ENCODE measurements at regions of chr6 and their contacts with region 1.

Region 1: DNA sequence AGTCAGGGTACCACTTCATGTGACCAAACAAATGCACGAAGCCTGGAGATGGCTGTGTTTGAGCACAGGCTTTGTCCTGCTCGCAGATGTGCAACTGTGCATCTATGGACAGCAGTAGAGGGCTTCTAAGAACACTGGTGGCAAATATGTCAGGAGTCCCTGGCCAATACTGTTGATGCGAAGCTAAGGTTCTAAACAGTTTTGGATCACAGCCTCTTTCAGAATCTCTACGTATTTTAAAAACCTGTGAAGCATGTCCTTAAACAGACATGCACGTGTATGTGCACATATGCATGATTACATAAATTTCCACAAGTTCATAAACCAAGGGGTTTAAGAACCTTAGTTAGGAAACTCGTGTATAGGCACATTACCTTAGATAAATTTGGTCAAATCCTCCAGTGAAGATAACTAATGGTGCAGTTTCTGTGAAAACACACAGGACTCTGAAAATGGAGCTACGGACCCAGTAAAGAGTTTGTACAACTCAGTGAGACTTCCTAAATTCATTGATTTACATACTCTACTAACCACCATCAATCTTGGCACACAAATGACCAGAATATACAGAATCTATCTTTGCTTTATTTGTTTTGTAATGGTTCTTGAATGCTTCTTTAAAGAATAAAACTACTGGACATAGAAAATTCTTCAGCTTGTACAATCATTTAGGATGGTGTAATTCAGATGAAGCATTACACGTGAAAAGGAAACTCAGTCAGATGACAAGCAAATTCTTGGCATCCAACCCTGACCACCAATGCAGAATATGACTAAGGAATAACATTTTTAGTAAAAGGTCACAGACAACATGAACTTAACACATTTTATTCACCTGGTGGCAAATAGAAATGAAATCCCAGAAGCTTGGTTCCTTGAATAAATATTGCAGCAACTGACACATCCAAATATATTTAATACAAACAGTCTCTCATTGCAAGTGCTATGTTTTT is 27.4 kb downstream of the KCNQ5 start:
- DNase-seq: no peak
- H3K4me3 Mint-ChIP-seq: no peak overlapping the region
- H3K27ac Mint-ChIP-seq: peak overlapping the region; percentile 35
- H3K4me1 Mint-ChIP-seq: peaks cover 41% of the 10 kb centered on the region
- H3K27me3 Mint-ChIP-seq: no peaks in the 10 kb centered on the region

Region 2: GRCh38 chr6:72683797-72684196 is 34.5 kb after region 1 on chr6:
- intact Hi-C with region 1: loop called (anchors 5 kb)
- DNase-seq: no peak
- H3K4me3 Mint-ChIP-seq: no peak overlapping the region
- H3K27ac Mint-ChIP-seq: no peak overlapping the region
- H3K4me1 Mint-ChIP-seq: peaks cover 12% of the 10 kb centered on the region
- H3K27me3 Mint-ChIP-seq: no peaks in the 10 kb centered on the region

Region 3: DNA sequence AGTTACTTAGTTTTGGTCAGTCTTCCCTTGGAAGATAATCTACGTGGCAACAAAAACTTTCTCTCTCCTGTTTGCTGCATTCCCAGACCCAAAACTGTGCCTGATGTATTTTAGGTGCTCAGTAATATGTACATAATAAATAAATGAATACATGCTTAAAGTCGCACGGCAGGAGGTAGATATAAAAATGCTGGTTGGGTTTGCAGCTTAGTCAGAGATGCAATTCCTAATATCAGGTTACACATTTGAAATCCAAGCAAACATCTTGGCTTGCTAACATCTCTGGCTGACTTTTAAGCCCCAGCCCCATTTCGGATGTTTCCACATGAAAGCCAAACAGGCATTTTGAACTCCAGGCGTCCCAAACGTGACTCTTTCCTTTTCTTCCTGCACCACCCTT is 63.6 kb after region 1 on chr6:
- intact Hi-C with region 1: no loop called
- DNase-seq: no peak
- H3K4me3 Mint-ChIP-seq: no peak overlapping the region
- H3K27ac Mint-ChIP-seq: no peak overlapping the region
- H3K4me1 Mint-ChIP-seq: peaks cover 2% of the 10 kb centered on the region
- H3K27me3 Mint-ChIP-seq: no peaks in the 10 kb centered on the region

Region 4: GRCh38 chr6:72740135-72740534 is 90.8 kb after region 1 on chr6:
- intact Hi-C with region 1: loop called (anchors 2 kb)
- DNase-seq: no peak
- H3K4me3 Mint-ChIP-seq: no peak overlapping the region
- H3K27ac Mint-ChIP-seq: peak overlapping the region; percentile 47
- H3K4me1 Mint-ChIP-seq: peaks cover 37% of the 10 kb centered on the region
- H3K27me3 Mint-ChIP-seq: no peaks in the 10 kb centered on the region